HepG2 (cell line): ENCODE measurements at regions of chr20 and their contacts with region 1.

Region 1: GRCh38 chr20:45095753-45096371 is 5.1 kb downstream of the KCNS1 start:
- DNase-seq: peak; percentile 69
- ATAC-seq: peak; percentile 60
- H3K4me3 ChIP-seq: no peak overlapping the region
- H3K27ac ChIP-seq: no peak overlapping the region
- H3K4me1 ChIP-seq: peaks cover 7% of the 10 kb centered on the region; the same call in 1 of the 2 replicates
- H3K27me3 ChIP-seq: peaks cover 0 to 22% of the 10 kb centered on the region in 2 experiments; a peak in 4 of 5 replicates
- CTCF ChIP-seq: peak; percentile 85
- EP300 ChIP-seq: no peak
- POLR2A ChIP-seq: no peak
- RAD21 ChIP-seq: peak; percentile 67

Region 2: DNA sequence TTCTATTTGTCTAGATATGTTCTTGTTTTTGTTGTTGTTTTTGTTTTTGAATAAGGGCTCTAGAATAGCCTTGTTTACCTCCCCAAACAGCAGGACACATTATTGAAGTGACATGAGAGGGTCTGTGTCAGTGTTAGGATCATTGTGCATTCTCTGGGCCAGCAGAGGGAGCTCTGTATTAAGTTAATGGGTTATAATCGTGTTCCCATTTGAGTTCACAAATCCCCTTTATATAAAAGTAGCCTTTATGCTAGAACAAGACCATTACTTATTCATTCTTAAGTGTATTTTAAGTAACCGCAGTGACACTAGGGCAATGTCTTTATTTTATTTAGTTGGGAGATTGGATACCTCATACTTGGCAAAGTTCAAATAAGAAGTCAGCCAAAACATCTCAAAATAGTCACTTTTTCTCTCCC is 84.7 kb before region 1 on chr20:
- CTCF ChIA-PET with region 1: interaction called, 15 read pairs
- POLR2A ChIA-PET with region 1: no interaction called
- in situ Hi-C with region 1: no loop called
- intact Hi-C with region 1: loop called (anchors 1 kb)
- DNase-seq: peak; percentile 49
- ATAC-seq: peak; percentile 87
- H3K4me3 ChIP-seq: no peak overlapping the region
- H3K27ac ChIP-seq: no peak overlapping the region
- H3K4me1 ChIP-seq: peaks cover 9% of the 10 kb centered on the region; the same call in 1 of the 2 replicates
- H3K27me3 ChIP-seq: no peaks in the 10 kb centered on the region
- CTCF ChIP-seq: peak; percentile 80
- EP300 ChIP-seq: no peak
- POLR2A ChIP-seq: no peak
- RAD21 ChIP-seq: peak; percentile 54; the same call in 1 of the 2 replicates

Region 3: DNA sequence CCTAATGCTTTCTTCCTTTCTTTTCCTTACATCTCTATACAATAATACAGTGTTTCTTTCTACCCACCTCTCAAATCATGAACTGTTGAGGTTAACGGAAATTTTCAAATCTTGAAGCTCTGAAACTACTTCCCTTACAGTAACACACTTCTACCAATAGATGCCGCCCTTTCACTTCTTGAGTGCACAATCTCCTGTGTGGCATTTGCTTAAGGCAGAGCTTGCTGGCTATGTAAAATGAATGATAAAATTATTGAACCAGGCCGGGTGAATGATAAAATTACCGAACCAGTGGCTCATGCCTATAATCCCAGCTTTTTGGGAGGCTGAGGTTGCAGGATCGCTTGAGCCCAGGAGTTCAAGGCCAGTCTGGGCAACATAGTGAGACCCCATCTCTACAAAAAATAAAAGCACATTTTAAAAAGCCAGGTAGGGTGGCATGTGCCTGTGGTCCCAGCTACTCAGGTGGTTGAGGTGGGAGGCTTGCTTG is 51.7 kb before region 1 on chr20:
- CTCF ChIA-PET with region 1: interaction called, 47 read pairs
- POLR2A ChIA-PET with region 1: interaction called, 7 read pairs
- in situ Hi-C with region 1: loop called (anchors 10 kb)
- intact Hi-C with region 1: loop called (anchors 1 kb)
- DNase-seq: peak; percentile 82
- ATAC-seq: peak; percentile 84
- H3K4me3 ChIP-seq: no peak overlapping the region
- H3K27ac ChIP-seq: no peak overlapping the region
- H3K4me1 ChIP-seq: no peaks in the 10 kb centered on the region
- H3K27me3 ChIP-seq: no peaks in the 10 kb centered on the region; a peak in 1 of 5 replicates
- CTCF ChIP-seq: peak; percentile 95
- EP300 ChIP-seq: no peak
- POLR2A ChIP-seq: no peak
- RAD21 ChIP-seq: peak; percentile 84

Region 4: DNA sequence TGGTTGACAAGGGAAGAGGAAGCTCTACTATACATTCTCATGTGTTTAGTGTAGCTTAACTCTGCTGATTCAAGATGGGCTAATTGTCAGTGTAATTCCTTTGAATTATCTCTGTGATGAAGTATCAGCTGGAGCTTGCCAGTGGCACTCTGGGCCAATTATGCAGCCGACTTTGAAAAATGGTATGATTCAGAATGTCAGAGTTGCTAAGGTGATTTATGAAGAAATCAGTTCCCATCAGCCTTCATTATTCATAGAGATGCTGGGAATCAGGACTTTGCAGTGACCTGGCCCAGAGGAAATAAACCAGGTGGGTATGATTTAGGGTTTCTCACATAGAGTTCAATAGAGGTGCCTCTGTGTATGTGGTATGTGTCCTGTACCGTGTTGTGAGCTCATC is 28.3 kb before region 1 on chr20:
- CTCF ChIA-PET with region 1: no interaction called
- POLR2A ChIA-PET with region 1: no interaction called
- in situ Hi-C with region 1: no loop called
- intact Hi-C with region 1: no loop called
- DNase-seq: no peak
- ATAC-seq: no peak
- H3K4me3 ChIP-seq: no peak overlapping the region
- H3K27ac ChIP-seq: no peak overlapping the region
- H3K4me1 ChIP-seq: no peaks in the 10 kb centered on the region
- H3K27me3 ChIP-seq: no peaks in the 10 kb centered on the region
- CTCF ChIP-seq: no peak
- EP300 ChIP-seq: no peak
- POLR2A ChIP-seq: no peak
- RAD21 ChIP-seq: no peak

Region 5: DNA sequence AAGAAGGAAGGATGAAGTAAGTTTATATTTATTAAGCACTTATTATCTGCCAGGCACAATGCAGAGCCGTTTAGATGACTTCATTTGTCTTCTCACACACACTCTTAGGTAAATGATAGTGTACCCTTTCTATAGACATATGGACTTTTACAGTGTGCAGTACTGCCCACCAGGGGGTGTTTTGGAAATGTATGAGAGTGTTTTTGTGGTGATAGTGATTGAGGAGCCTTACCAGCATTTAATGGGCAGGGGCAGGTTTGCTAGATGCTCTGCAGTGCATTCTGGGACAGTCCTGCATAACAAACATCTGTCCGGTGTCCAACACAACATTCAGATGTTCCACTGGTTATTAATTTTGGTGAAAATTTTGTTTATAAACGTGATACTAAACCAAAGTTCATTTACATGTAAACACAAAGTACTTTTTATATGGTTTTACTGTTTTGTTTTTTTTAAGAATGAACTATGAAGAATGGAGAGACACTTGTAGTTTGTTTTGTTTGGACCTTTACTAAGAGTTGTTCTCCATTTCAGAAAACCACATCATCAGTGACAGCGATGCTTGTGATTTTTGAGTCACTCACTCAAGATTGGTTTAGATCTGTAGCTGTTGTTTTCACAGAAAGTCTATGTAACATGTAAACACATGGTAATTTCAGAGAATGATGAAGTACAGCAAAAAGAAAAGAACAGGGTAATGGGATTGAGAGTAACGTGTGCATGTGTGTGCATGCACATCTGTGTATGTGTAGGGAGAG is 14.8 kb before region 1 on chr20:
- CTCF ChIA-PET with region 1: interaction called, 16 read pairs
- POLR2A ChIA-PET with region 1: no interaction called
- in situ Hi-C with region 1: no loop called
- intact Hi-C with region 1: no loop called
- DNase-seq: peak; percentile 63
- ATAC-seq: peak; percentile 77
- H3K4me3 ChIP-seq: no peak overlapping the region
- H3K27ac ChIP-seq: no peak overlapping the region
- H3K4me1 ChIP-seq: peaks cover 25% of the 10 kb centered on the region
- H3K27me3 ChIP-seq: no peaks in the 10 kb centered on the region
- CTCF ChIP-seq: peak; percentile 56
- EP300 ChIP-seq: no peak
- POLR2A ChIP-seq: no peak
- RAD21 ChIP-seq: peak; percentile 45; the same call in 1 of the 2 replicates